ENCODE measurements at regions of chr11 and their contacts with region 1.

Region 1: DNA sequence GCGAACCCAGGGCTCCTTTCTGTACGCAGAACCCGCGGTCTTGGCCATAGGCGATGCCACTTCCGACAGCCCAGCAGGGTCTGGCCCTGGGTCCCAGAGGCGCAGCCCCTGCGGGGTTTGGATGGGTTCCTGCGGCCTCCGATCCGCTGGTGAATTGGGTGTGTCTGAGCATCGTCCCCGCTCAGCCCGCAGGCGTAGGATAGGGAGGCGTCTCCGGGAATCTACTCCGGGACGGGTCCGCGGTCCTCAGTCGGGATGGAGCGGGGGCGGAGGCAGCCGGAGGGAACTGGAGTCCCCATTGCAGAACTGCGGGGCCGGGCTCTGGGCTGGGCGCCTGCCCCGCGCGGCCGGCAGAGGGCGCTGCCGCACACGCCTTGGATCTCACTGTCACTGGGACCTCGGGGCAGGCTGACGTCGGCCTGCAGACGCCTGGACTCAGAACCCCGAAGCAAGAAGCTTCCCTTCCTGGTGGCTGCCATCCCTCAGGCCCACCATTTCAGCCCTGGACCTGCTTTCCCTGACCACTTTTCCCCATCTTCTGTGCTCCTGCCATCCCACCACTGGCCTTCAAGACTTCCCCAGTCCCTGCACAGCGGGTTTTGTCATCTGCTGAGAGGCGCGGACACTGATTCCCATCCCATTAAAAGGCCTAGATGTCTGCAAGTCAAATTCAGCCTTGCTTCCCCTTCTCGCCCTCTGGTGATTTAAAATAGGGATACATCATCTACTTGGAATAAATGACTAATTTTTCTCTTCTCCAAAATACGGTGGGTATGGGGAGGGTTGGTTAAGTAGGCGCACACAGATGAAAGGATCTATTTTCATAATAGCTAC is 38.3 kb upstream of the CREB3L1 start:
- DNase-seq: peak; percentile 60
- H3K4me3 ChIP-seq: peak overlapping the region; percentile 56
- H3K27ac ChIP-seq: peak overlapping the region; percentile 73
- H3K27me3 ChIP-seq: no peaks in the 10 kb centered on the region
- CTCF ChIP-seq: peak; percentile 87

Region 2: DNA sequence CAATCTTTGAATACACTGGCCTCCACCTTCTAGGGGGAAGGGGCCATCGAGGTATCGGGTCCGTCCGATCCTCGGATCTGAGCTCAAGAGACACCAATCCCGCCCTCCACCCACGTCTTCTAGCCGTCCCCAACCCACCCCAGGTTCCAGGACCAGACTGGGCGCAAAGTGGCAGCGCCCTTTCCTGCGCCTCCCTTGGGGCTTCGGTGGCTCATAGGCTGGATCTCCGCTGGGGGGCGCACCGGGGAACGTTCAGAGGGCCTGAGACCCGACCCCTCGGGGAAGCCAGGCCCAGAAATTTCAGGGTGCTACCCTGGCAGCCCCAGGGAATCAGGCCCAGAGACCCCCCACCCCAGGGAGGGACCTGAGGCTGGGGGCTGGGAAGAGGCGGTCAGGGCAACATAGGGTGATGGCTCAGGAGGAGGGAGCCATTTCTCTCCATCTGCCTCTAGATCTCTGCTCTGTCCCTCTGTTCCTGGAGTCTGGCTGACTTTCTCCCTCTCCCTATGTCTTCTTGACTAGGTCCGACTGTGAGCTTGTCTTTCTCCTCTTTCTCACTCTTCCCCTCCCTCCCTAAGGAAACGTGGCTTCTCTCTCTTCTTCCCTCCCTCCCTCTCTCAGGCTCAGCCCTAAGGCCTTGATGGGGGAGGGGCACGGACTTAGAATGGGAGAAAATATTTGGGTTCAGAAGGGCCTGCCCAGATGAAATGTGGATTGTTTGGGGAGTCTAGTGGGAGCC is 39.4 kb after region 1 on chr11:
- CTCF ChIA-PET with region 1: interaction called, 89 read pairs
- POLR2A ChIA-PET with region 1: interaction called, 15 read pairs
- DNase-seq: no peak
- H3K4me3 ChIP-seq: peak overlapping the region; percentile 95
- H3K27ac ChIP-seq: peak overlapping the region; percentile 91
- H3K27me3 ChIP-seq: no peaks in the 10 kb centered on the region
- CTCF ChIP-seq: peak; percentile 83

Region 3: DNA sequence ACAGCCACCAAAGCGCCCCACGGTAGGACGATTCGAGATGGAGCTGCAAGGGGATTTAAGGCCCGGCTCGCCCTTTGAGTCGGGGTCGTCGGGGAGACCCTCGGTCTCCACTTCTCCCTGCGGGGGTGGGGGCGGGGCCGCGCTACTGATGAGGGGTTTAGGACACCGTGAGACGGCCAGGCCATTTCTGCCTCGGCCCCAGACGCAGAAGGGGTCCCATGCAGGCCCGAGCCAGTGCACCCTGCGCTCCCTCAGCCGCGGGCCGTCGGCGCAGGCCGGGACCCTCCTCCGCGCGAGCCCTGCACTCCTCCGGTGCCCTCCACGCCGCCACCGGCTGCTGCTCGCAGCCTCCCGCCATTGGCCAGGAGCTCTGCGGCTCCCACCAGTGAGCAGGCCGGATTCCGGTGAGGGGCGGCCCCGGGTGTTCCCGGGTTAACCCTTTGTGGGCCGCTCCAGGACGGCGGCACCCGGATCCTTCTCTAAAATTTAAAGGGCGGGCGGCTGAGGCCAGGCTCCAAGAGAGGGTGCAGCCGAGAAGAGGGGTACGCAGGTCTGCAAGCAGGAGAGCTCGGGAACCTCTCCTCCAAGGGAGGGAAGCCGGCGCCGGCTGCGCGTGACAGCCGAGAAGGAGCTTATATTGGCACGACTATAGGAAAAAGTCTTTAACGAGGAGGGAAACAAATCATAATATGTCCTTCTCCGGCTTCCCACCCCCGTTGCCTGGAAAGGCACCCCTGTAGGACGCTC is 56.3 kb after region 1 on chr11:
- CTCF ChIA-PET with region 1: interaction called, 58 read pairs
- POLR2A ChIA-PET with region 1: interaction called, 35 read pairs
- DNase-seq: no peak
- H3K4me3 ChIP-seq: peak overlapping the region; percentile 61
- H3K27ac ChIP-seq: peak overlapping the region; percentile 88
- H3K27me3 ChIP-seq: no peaks in the 10 kb centered on the region
- CTCF ChIP-seq: no peak

Region 4: GRCh38 chr11:46302866-46303265 is 63.7 kb after region 1 on chr11:
- CTCF ChIA-PET with region 1: interaction called, 190 read pairs
- POLR2A ChIA-PET with region 1: interaction called, 5 read pairs
- DNase-seq: no peak
- H3K4me3 ChIP-seq: no peak overlapping the region
- H3K27ac ChIP-seq: no peak overlapping the region
- H3K27me3 ChIP-seq: no peaks in the 10 kb centered on the region
- CTCF ChIP-seq: no peak

Region 5: DNA sequence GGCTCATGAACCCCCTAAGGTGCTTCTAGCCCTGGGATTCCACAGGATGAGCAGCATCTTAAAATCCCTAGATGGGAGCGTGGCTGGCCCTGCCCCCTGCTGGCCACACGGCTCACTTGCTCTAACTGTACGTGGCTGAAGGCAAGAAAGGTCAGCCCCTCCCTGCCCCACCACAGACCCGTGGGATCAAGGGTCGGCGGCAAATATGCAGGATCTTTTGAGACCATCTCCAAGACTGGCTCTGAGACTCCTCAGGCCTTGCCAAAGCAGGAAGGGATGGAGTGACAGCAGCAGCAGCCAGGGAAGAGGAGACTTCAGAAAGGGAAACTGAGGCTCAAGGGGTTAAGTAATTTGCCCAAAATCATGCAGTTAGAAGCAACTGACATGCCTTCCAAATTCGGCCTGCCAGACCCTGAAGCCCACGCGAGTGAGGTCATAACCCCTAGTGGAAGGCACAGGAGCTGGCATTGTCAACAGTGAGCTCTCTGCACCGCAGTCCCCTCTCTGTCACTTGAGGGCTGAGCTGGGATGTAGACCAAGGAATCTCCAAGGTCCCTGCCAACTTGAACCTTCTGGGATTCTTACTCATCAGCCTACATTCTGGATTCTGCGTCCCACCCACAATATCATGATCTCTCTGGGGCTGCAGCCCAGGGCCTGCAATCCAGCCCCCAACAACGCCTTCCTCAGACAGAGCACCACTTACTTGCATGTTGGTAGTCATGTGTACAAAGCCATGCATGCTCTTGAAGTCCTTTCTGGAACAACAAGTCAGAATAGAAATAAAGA is 69.6 kb after region 1 on chr11:
- CTCF ChIA-PET with region 1: interaction called, 190 read pairs
- POLR2A ChIA-PET with region 1: interaction called, 4 read pairs
- DNase-seq: no peak
- H3K4me3 ChIP-seq: no peak overlapping the region
- H3K27ac ChIP-seq: peak overlapping the region; percentile 47
- H3K27me3 ChIP-seq: no peaks in the 10 kb centered on the region
- CTCF ChIP-seq: peak; percentile 87

Region 6: GRCh38 chr11:46315033-46315738 is 76.0 kb after region 1 on chr11:
- CTCF ChIA-PET with region 1: interaction called, 190 read pairs
- POLR2A ChIA-PET with region 1: interaction called, 4 read pairs
- DNase-seq: no peak
- H3K4me3 ChIP-seq: no peak overlapping the region
- H3K27ac ChIP-seq: peak overlapping the region; percentile 21
- H3K27me3 ChIP-seq: no peaks in the 10 kb centered on the region
- CTCF ChIP-seq: peak; percentile 92

Region 7: DNA sequence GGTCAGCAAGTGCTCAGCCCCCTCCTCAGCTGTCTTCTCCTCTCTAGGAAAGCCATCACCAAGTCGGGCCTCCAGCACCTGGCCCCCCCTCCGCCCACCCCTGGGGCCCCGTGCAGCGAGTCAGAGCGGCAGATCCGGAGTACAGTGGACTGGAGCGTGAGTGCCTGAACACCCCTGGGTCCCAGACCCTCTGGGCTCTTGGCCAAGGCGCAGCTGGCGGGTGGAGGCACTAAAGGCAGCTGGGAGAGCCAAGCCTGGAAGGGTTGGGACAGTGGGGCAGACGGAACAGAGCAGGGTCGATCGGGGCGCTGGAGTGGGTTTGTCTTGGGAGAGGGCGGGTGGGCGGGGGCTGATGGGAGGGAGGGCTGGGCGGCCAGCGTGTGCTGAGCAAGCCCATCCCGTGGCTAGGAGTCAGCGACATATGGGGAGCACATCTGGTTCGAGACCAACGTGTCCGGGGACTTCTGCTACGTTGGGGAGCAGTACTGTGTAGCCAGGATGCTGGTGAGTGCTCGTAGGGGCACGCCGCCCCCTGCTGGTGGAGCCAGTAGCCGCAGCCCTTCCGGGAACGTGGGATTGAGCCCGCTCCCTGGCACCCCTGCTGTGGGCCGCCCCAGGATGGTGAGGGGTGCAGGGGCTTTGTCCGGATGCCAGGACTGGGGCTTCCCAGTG is 128.2 kb after region 1 on chr11:
- CTCF ChIA-PET with region 1: interaction called, 10 read pairs
- POLR2A ChIA-PET with region 1: no interaction called
- DNase-seq: no peak
- H3K4me3 ChIP-seq: no peak overlapping the region
- H3K27ac ChIP-seq: no peak overlapping the region
- H3K27me3 ChIP-seq: no peaks in the 10 kb centered on the region
- CTCF ChIP-seq: peak; percentile 77

Region 8: DNA sequence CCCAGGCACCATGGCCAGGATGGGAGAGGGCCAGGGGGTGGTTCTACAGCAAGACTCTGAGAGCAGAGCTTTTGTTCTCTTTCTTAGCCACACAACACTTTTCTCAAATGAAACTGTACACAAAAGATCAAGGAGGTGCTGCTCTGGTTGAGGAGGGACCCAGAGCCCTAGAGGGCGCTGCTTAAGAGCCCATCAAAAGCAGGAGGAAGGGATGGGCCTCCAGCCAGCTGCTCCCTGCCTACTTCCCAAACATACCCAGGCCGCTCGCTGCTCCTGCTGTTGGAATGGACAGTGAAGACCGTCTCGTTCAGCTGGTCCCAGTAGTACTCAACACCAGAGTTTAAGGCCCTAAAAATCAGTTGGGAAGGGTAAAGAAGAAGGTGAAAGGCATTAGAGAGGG is 170.8 kb after region 1 on chr11:
- CTCF ChIA-PET with region 1: no interaction called
- POLR2A ChIA-PET with region 1: no interaction called
- DNase-seq: no peak
- H3K4me3 ChIP-seq: no peak overlapping the region
- H3K27ac ChIP-seq: no peak overlapping the region
- H3K27me3 ChIP-seq: no peaks in the 10 kb centered on the region
- CTCF ChIP-seq: peak; percentile 39

Measured in AG04450 (cell line).